ENCODE measurements at regions of chrX and their contacts with region 1.

Region 1: GRCh38 chrX:109920325-109920724 is 82.6 kb upstream of the TMEM164 start:
- DNase-seq: no peak
- ATAC-seq: no peak
- H3K4me3 Mint-ChIP-seq: no peak overlapping the region
- H3K27ac Mint-ChIP-seq: no peak overlapping the region
- H3K4me1 Mint-ChIP-seq: no peaks in the 10 kb centered on the region
- H3K27me3 Mint-ChIP-seq: no peaks in the 10 kb centered on the region

Region 2: GRCh38 chrX:110021180-110022022 is 101.1 kb after region 1 on chrX:
- CTCF ChIA-PET with region 1: no interaction called
- POLR2A ChIA-PET with region 1: no interaction called
- intact Hi-C with region 1: no loop called
- DNase-seq: no peak
- ATAC-seq: no peak
- H3K4me3 Mint-ChIP-seq: no peak overlapping the region
- H3K27ac Mint-ChIP-seq: no peak overlapping the region
- H3K4me1 Mint-ChIP-seq: peaks cover 2% of the 10 kb centered on the region
- H3K27me3 Mint-ChIP-seq: no peaks in the 10 kb centered on the region

Region 3: GRCh38 chrX:110146521-110146920 is 226.2 kb after region 1 on chrX:
- CTCF ChIA-PET with region 1: no interaction called
- POLR2A ChIA-PET with region 1: no interaction called
- intact Hi-C with region 1: loop called in 1 of 2 experiments (anchors 5 kb)
- DNase-seq: peak; percentile 38
- ATAC-seq: peak; percentile 73
- H3K4me3 Mint-ChIP-seq: no peak overlapping the region
- H3K27ac Mint-ChIP-seq: no peak overlapping the region
- H3K4me1 Mint-ChIP-seq: peaks cover 7% of the 10 kb centered on the region
- H3K27me3 Mint-ChIP-seq: no peaks in the 10 kb centered on the region

Measured in activated CD4-positive, alpha-beta T cell treated with anti-CD3 and anti-CD28 coated beads for 36 hours (primary cell).